CD4-positive, alpha-beta T cell (primary cell): ENCODE measurements at regions of chr3 and their contacts with region 1.

Region 1: DNA sequence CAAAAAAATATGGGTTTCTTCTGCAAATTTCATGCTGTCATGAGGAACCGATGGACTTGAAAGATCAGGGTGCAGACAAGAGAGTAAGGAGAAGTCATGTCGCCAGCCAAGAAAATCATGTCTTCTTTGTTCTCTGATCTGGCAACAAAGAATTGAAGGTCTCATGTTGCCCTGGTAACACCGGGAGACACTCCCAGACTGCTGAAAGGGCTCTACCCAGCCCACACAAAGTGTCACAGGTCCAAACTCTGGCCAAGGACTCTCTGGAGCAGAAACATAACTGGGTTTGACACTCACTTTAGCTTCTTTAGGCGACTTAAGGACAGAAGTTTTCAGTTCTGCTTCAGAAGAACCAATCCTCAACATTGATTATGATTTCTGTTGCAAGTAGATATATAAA is 42.9 kb downstream of the SIDT1 start:
- DNase-seq: no peak
- ATAC-seq: no peak
- H3K4me3 ChIP-seq: no peak overlapping the region
- H3K4me3 Mint-ChIP-seq: no peak overlapping the region
- H3K27ac ChIP-seq: no peak overlapping the region
- H3K27ac Mint-ChIP-seq: peak overlapping the region; percentile 27
- H3K4me1 ChIP-seq: no peaks in the 10 kb centered on the region
- H3K4me1 Mint-ChIP-seq: peaks cover 5% of the 10 kb centered on the region
- H3K27me3 ChIP-seq: no peaks in the 10 kb centered on the region
- H3K27me3 Mint-ChIP-seq: no peaks in the 10 kb centered on the region
- CTCF ChIP-seq: no peak

Region 2: DNA sequence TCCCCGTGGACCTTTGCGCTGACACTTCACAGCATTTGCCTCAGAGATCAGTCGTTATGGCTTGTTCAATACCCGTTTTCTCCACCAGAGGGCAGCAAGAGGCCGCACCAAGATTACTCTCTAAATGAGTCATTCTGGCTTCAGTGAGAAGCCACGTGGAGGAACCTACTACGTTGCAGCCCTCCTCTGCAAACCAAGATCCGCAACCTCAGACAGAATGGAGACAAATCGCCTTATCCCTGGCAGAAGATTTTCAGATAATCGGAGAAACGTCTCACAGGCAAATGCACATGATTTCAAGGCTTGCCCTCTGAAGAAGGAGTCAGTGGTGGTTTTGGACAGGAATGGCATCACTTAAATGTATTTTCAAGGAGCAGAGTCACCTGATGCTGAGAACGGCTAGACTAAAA is 523.9 kb before region 1 on chr3:
- CTCF ChIA-PET with region 1: interaction called, 3 read pairs
- POLR2A ChIA-PET with region 1: no interaction called
- intact Hi-C with region 1: loop called (anchors 2 to 5 kb)
- DNase-seq: peak; percentile 75 to 92 (median 86)
- ATAC-seq: peak; percentile 91
- H3K4me3 ChIP-seq: no peak overlapping the region
- H3K4me3 Mint-ChIP-seq: no peak overlapping the region
- H3K27ac ChIP-seq: no peak overlapping the region
- H3K27ac Mint-ChIP-seq: no peak overlapping the region
- H3K4me1 ChIP-seq: peaks cover 5% of the 10 kb centered on the region
- H3K4me1 Mint-ChIP-seq: peaks cover 19% of the 10 kb centered on the region
- H3K27me3 ChIP-seq: no peaks in the 10 kb centered on the region
- H3K27me3 Mint-ChIP-seq: no peaks in the 10 kb centered on the region
- CTCF ChIP-seq: peak; percentile 82

Region 3: DNA sequence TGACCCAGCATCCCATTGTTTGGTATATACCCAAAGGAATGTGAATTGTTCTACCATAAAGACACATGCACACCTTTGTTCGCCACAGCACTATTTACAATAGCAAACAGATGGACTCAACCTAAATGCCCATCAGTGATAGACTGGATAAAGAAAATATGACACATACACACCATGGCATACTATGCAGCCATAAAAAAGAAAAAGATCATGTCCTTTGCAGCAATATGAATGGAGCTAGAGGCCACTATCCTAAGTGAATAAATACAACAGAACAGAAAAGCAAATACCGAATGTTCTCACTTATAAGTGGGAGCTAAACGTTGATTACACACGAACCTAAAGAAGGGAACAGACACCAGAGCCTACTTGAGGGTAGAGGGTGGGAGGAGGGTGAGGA is 132.6 kb after region 1 on chr3:
- CTCF ChIA-PET with region 1: no interaction called
- POLR2A ChIA-PET with region 1: no interaction called
- intact Hi-C with region 1: no loop called
- DNase-seq: no peak
- ATAC-seq: no peak
- H3K4me3 ChIP-seq: no peak overlapping the region
- H3K4me3 Mint-ChIP-seq: no peak overlapping the region
- H3K27ac ChIP-seq: no peak overlapping the region
- H3K27ac Mint-ChIP-seq: no peak overlapping the region
- H3K4me1 ChIP-seq: no peaks in the 10 kb centered on the region
- H3K4me1 Mint-ChIP-seq: no peaks in the 10 kb centered on the region
- H3K27me3 ChIP-seq: peaks cover 0 to 5% of the 10 kb centered on the region in 2 experiments
- H3K27me3 Mint-ChIP-seq: peaks cover 48% of the 10 kb centered on the region
- CTCF ChIP-seq: no peak